Mammary epithelial cell (primary cell): ENCODE measurements at regions of chr3 and their contacts with region 1.

Region 1: GRCh38 chr3:110314512-110315114 is 757.0 kb upstream of the NECTIN3 start:
- DNase-seq: peak; percentile 50
- H3K4me3 ChIP-seq: no peak overlapping the region
- H3K27ac ChIP-seq: no peak overlapping the region
- H3K4me1 ChIP-seq: no peaks in the 10 kb centered on the region
- H3K27me3 ChIP-seq: no peaks in the 10 kb centered on the region
- CTCF ChIP-seq: peak; percentile 81 to 91

Region 2: DNA sequence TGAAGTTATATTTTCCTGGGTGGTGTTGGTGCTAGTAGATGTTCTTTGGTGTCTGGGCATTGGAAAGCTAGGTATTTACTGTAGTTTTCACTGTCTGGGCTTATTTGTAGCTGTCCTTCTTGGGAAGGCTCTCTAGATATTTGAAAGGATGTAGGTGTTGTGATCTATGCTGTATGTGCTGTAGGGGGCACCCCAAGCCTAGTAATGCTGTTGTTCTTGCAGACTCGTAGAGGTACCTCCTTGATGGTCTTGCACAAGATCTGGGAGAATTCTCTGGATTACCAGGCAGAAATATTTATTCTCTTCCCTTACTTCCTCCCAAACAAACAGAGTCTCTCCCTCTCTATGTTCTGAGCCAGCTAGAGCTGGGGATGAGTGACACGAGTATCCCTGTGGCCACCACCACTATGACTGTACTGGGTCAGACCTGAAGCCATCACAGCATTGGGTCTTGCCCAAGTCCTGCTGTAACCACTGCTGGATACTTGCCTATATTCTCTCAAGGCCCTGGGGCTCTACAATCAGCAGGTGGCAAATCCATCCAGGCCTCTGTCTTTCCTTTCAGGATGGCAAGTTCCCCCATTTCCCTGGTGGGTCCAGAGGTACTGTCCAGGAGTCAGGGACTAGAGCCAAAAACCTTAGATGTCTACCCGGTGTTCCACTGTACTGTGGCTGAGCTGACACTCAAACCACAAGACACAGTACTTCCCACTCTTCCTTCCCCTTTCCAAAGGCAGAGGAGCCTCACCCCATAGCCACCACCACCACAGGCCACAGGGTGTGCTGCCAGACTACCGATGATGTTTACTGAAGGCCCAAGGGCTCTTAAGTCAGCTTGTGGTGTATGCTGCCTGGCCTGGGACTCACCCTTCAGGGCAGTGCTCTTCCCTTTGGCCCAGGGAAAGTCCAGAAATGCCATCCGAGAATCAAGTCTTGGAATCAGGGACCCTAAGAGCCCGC is 782.1 kb before region 1 on chr3:
- CTCF ChIA-PET with region 1: no interaction called
- dilution Hi-C with region 1: no loop called
- in situ Hi-C with region 1: loop called in 1 of 2 experiments (anchors 25 kb)
- intact Hi-C with region 1: loop called (anchors 1 kb)
- DNase-seq: peak; percentile 69
- H3K4me3 ChIP-seq: no peak overlapping the region
- H3K27ac ChIP-seq: no peak overlapping the region
- H3K4me1 ChIP-seq: no peaks in the 10 kb centered on the region
- H3K27me3 ChIP-seq: no peaks in the 10 kb centered on the region
- CTCF ChIP-seq: peak; percentile 18 to 60

Region 3: GRCh38 chr3:109806929-109807328 is 507.7 kb before region 1 on chr3:
- CTCF ChIA-PET with region 1: no interaction called
- dilution Hi-C with region 1: no loop called
- in situ Hi-C with region 1: no loop called
- intact Hi-C with region 1: loop called (anchors 2 kb)
- DNase-seq: peak; percentile 78
- H3K4me3 ChIP-seq: no peak overlapping the region
- H3K27ac ChIP-seq: peak overlapping the region; percentile 14
- H3K4me1 ChIP-seq: peaks cover 27% of the 10 kb centered on the region
- H3K27me3 ChIP-seq: no peaks in the 10 kb centered on the region
- CTCF ChIP-seq: no peak

Region 4: DNA sequence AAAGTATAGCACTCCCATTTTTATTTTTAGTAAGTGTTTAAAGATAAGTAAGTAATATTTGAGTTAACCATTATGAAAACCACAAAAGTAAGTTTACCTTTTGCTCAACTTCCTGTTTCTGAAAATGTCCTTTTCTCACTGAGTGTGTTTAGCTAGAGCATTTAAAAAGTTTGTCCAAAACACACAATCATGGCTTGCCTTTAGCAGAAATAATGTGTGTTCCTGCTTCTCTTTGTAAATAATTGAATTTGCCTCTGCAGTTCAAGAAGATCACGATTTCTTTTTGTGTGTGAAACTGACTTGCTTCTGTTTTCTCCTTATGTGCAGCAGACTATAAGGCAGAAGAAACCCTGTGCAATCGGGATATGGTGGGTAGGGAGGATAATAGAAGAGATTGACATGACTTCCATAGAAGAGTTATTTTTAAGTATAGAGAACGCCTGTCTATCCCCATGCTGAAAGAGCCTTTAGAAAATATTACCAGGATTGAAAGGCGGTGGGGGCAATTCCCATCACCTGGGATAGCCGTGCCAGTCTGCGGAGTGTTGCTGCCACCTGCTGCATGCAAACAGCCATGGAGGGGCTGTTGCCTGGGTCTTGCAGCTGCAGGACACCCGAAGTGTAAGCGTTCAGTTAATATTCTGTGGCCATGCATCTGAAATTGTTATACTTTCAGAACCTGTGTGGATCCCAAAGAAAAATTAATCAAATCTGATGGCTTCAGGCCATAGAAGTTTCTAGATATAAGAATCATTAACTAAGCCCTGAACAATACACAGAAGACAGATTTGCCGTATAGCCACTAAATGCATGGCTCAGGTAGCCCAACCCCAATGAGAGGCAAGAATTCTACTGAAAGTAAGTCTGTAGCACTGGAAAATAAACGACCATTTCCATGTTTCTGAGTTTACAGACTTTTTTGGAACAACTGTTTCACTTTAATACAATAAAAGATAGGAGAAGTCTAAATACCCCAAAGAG is 1225.0 kb after region 1 on chr3:
- CTCF ChIA-PET with region 1: no interaction called
- dilution Hi-C with region 1: no loop called
- in situ Hi-C with region 1: no loop called
- intact Hi-C with region 1: loop called (anchors 10 kb)
- DNase-seq: peak; percentile 55
- H3K4me3 ChIP-seq: no peak overlapping the region
- H3K27ac ChIP-seq: no peak overlapping the region
- H3K4me1 ChIP-seq: peaks cover 21% of the 10 kb centered on the region
- H3K27me3 ChIP-seq: no peaks in the 10 kb centered on the region
- CTCF ChIP-seq: peak; percentile 92 to 94